Panc1 (cell line): ENCODE measurements at regions of chr16 and their contacts with region 1.

Region 1: GRCh38 chr16:1713933-1714332 is 7.9 kb downstream of the MAPK8IP3 start:
- DNase-seq: no peak
- ATAC-seq: no peak
- H3K4me3 ChIP-seq: no peak overlapping the region
- H3K27ac ChIP-seq: peak overlapping the region; percentile 23; the same call in 1 of the 2 replicates
- H3K4me1 ChIP-seq: peaks cover 43% of the 10 kb centered on the region
- H3K27me3 ChIP-seq: no peaks in the 10 kb centered on the region
- CTCF ChIP-seq: no peak

Region 2: GRCh38 chr16:1826691-1827575 is 113.0 kb after region 1 on chr16 and contains the starts of genes FAHD1 and HAGH:
- CTCF ChIA-PET with region 1: no interaction called
- POLR2A ChIA-PET with region 1: no interaction called
- in situ Hi-C with region 1: no loop called
- intact Hi-C with region 1: no loop called
- DNase-seq: peak; percentile 85
- ATAC-seq: peak; percentile 93
- H3K4me3 ChIP-seq: peak within 1 kb of the TSS; percentile 99 to 100
- H3K27ac ChIP-seq: peak within 1 kb of the TSS; percentile 96
- H3K4me1 ChIP-seq: peaks cover 17% of the 10 kb centered on the region
- H3K27me3 ChIP-seq: no peaks in the 10 kb centered on the region
- CTCF ChIP-seq: no peak
- total RNA-seq, gene FAHD1: 34.6 TPM
- total RNA-seq, gene HAGH: 58.9 TPM

Region 3: DNA sequence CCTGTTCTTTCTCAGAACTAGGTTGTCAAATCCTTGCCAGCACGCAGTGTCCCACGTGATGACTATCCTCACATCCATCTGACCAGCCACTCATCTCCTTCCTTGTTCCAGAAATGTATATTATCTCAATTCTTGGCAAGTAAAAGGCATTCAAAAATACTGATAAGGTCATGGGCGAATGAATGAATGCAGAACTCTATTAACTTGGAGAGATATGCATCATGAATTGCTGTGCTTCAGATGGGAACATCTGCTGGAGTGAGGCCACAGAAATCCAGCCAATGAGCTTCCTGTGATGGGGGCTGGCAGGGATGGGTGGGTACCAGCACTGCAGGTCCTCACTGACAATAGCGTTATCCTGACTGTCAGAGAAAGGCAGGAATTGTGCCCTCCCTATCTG is 132.1 kb after region 1 on chr16:
- CTCF ChIA-PET with region 1: no interaction called
- POLR2A ChIA-PET with region 1: interaction called, 16 read pairs
- in situ Hi-C with region 1: no loop called
- intact Hi-C with region 1: no loop called
- DNase-seq: no peak
- ATAC-seq: no peak
- H3K4me3 ChIP-seq: no peak overlapping the region
- H3K27ac ChIP-seq: no peak overlapping the region
- H3K4me1 ChIP-seq: no peaks in the 10 kb centered on the region
- H3K27me3 ChIP-seq: 0 out of 2 replicates have a peak, but pooled peaks cover 2% of the 10 kb centered on the region
- CTCF ChIP-seq: no peak